ENCODE measurements at regions of chr6 and their contacts with region 1.

Region 1: GRCh38 chr6:10954590-10955010 is 67.7 kb downstream of the SYCP2L start:
- DNase-seq: peak; percentile 73
- ATAC-seq: peak; percentile 53 to 72

Region 2: DNA sequence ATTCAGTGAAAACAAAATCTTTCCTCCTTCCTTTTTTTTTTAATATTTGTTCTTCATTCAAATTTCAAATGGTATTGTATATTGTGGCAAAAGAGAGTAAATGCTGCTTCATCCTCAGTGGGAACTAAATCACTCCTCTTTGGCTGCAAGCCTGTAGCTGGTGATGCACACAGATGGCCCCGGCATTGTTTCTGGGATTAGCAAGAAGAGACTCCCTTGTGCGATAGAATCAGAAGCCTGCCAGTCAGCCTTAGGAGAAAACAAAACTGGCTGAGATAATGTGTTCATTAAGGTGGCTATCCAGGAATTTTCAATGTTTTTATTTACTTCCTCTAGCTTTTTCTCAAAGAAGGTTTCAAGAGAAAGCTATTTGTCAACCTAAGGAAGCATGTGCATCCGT is 110.2 kb after region 1 on chr6:
- intact Hi-C with region 1: loop called (anchors 2 to 5 kb)
- DNase-seq: no peak
- ATAC-seq: no peak

Region 3: DNA sequence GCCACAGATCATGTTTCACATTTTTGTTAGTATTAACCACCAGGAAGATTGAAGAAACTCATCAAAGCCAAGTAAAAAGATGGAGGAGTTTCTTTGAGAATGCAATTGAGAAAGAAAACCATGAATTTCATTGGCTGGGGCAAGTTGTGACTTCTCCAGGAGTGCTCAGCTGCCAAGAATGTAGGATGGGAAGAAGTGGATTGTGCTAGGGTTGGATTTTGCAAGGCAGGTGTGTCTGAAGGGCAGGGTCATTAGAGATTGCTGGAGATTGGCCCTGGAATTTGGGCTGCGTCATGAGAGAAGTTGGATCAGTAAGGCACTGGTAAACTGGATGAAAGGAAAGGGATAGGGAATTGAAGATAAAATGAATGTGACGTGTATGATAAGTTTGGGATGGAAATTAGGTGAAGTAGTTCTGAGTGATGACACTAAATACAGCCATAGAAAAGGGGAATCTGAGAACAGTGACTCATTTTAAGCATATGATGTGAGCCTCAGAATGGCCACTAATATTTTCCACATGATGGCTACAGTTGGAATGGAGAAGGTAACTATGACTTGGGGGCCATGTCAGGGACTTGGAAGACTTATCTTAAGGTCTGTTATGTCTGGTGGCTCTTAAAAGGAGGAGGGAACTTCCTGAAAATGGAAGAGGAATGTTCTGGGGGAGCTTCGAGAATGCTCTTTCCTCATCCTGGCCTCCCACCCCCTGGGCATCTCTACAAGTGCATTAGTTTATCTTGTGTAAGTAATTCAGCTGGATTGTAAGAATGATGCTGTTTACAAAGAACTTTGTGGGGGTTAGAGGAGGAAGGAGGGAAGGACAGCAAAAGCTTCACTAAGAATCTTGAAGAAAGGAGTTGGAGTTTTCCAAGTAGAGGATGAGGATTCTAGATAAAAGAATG is 184.7 kb after region 1 on chr6:
- intact Hi-C with region 1: no loop called
- DNase-seq: no peak
- ATAC-seq: peak; percentile 30 to 77

Region 4: GRCh38 chr6:11869672-11870340 is 915.2 kb after region 1 on chr6:
- intact Hi-C with region 1: no loop called
- DNase-seq: peak; percentile 51
- ATAC-seq: peak; percentile 72 to 92

Measured in left cardiac atrium (tissue), 4 donors.